ENCODE measurements at regions of chr12 and their contacts with region 1.

Region 1: GRCh38 chr12:56041552-56042429 is at the start of gene RPS26:
- DNase-seq: peak; percentile 75 to 97 (median 94)
- ATAC-seq: peak; percentile 94
- H3K4me3 ChIP-seq: peak within 1 kb of the TSS; percentile 100
- H3K4me3 Mint-ChIP-seq: peak within 1 kb of the TSS; percentile 91 to 100 (median 98)
- H3K27ac ChIP-seq: peak within 1 kb of the TSS; percentile 84
- H3K27ac Mint-ChIP-seq: peak within 1 kb of the TSS; percentile 94 to 99 (median 97)
- H3K4me1 ChIP-seq: peaks cover 16 to 19% of the 10 kb centered on the region in 2 donors
- H3K4me1 Mint-ChIP-seq: peaks cover 14 to 56% (median 34%) of the 10 kb centered on the region in 7 donors
- H3K27me3 ChIP-seq: no peaks in the 10 kb centered on the region
- H3K27me3 Mint-ChIP-seq: no peaks in the 10 kb centered on the region
- total RNA-seq, gene RPS26: 40.8 to 64.5 (median 46.4) TPM

Region 2: DNA sequence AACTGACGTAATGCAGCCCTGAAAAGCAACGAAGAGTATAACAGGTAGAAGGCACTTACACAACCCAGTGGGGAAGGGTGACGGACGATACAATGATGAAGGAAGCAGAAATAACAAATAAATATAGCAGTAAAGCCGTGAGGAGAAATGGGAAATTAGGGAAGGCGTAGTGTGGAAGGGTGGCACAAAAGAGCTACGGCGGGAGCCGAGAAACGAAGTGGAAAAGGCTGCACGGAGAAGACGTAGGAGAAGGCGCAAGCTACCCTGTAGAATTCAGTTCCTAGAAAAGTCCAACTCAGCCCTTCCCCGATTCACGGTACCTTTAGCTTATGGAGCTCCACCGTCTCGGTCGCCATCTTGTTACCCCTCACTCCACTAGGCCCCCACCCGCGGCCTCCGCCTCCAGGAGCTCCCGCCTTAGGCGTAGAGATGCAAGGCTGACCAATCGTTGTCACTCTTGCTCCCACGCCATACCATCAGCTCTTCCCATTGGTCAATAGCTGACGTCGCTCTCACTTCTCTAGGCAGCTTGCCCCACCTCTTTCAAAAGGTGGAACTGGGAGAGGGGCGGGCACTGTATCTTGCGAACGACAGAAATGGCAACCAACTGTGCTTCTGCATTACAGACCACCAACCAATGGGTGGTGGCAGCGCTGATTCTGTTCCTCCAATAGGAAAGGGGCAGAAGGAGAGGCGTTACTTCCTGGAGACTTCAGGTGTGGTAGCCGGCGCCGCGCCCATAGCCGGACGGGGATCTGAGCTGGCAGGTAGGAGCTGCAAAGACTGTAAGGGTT is 224.2 kb before region 1 on chr12 and contains the starts of genes ORMDL2 and SARNP:
- CTCF ChIA-PET with region 1: no interaction called
- POLR2A ChIA-PET with region 1: interaction called, 3 read pairs
- intact Hi-C with region 1: loop called in 1 of 2 experiments (anchors 1 kb)
- DNase-seq: peak; percentile 81 to 99 (median 98)
- ATAC-seq: peak; percentile 96
- H3K4me3 ChIP-seq: peak within 1 kb of the TSS; percentile 94
- H3K4me3 Mint-ChIP-seq: no peak within 1 kb of the TSS
- H3K27ac ChIP-seq: peak within 1 kb of the TSS; percentile 88
- H3K27ac Mint-ChIP-seq: no peak within 1 kb of the TSS
- H3K4me1 ChIP-seq: peaks cover 22 to 41% of the 10 kb centered on the region in 2 donors
- H3K4me1 Mint-ChIP-seq: peaks cover 32 to 45% (median 37%) of the 10 kb centered on the region in 7 donors
- H3K27me3 ChIP-seq: no peaks in the 10 kb centered on the region
- H3K27me3 Mint-ChIP-seq: no peaks in the 10 kb centered on the region
- total RNA-seq, gene ORMDL2: 12.3 to 67.3 (median 40.5) TPM
- total RNA-seq, gene SARNP: 28.0 to 73.0 (median 41.7) TPM

Region 3: GRCh38 chr12:55996715-55997534 is 44.9 kb before region 1 on chr12 and contains the start of gene SUOX:
- CTCF ChIA-PET with region 1: interaction called, 8 read pairs
- POLR2A ChIA-PET with region 1: interaction called, 6 read pairs
- intact Hi-C with region 1: loop called (anchors 1 kb)
- DNase-seq: peak in 3 of 9 donors; percentile 8 to 58 (median 31)
- ATAC-seq: peak; percentile 93
- H3K4me3 ChIP-seq: no peak within 1 kb of the TSS
- H3K4me3 Mint-ChIP-seq: peak within 1 kb of the TSS; percentile 49 to 87 (median 62)
- H3K27ac ChIP-seq: no peak within 1 kb of the TSS
- H3K27ac Mint-ChIP-seq: peak within 1 kb of the TSS in 7 of 9 donors; percentile 19 to 78 (median 63)
- H3K4me1 ChIP-seq: peaks cover 0 to 14% of the 10 kb centered on the region in 2 donors
- H3K4me1 Mint-ChIP-seq: peaks cover 8 to 37% (median 16%) of the 10 kb centered on the region in 7 donors
- H3K27me3 ChIP-seq: no peaks in the 10 kb centered on the region
- H3K27me3 Mint-ChIP-seq: peaks cover 0 to 4% (median 0%) of the 10 kb centered on the region in 5 donors
- total RNA-seq, gene SUOX: 1.9 to 10.4 (median 7.1) TPM

Region 4: DNA sequence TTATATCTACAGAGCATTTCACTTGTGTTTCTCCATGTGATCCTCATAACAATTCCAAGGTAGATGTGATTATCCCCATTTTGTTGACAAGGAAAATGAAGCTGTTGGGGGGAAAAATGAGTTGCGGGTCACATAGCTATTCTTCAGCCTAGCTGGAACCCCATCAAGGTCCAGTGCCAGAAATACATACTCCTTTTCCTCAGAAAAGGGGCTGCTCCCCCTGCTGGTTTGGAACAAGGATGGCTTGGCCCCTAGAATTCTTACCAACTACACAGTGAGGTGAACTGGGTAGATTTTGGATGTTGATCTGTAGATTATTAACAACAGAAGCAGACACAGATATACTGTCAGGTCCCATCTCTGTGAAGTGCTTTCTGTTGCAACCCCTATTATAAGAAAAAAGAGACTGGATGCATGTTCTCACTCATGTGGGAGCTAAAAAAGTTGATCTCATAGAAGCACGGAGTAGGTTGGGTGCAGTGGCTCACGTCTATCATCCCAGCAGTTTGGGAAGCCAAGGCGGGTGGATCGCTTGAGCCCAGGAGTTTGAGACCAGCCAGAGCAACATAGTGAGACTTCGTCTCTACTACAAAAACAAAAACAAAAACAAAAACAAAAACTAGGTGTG is 12.0 kb before region 1 on chr12:
- CTCF ChIA-PET with region 1: interaction called, 4 read pairs
- POLR2A ChIA-PET with region 1: interaction called, 9 read pairs
- intact Hi-C with region 1: loop called in 1 of 2 experiments (anchors 1 kb)
- DNase-seq: peak in 8 of 9 donors; percentile 24 to 59 (median 46)
- ATAC-seq: peak; percentile 71
- H3K4me3 ChIP-seq: no peak overlapping the region
- H3K4me3 Mint-ChIP-seq: peak overlapping the region in 1 of 10 donors; percentile 1
- H3K27ac ChIP-seq: no peak overlapping the region
- H3K27ac Mint-ChIP-seq: peak overlapping the region in 4 of 9 donors; percentile 3 to 74 (median 32)
- H3K4me1 ChIP-seq: peaks cover 0 to 7% of the 10 kb centered on the region in 2 donors
- H3K4me1 Mint-ChIP-seq: peaks cover 9 to 54% (median 20%) of the 10 kb centered on the region in 7 donors
- H3K27me3 ChIP-seq: no peaks in the 10 kb centered on the region
- H3K27me3 Mint-ChIP-seq: no peaks in the 10 kb centered on the region

Region 5: DNA sequence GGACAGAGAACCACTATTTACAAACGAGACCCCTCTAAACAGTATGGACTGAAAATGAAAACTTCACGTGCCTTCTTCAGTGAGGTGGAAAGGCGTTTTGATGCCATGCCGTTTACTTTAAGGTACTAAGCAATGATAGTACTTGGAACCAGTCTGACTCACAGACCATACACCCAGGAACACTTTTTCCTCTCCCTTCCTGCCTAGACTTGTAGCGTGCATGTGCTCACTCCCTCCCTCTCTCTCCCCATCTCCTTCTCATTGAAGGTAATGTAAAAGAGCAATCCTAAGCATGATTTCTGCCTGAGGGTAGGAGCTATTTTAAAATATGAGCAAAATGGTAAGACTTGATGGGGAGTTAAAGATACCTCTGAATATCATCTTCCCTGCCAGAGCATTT is 68.8 kb after region 1 on chr12:
- CTCF ChIA-PET with region 1: interaction called, 3 read pairs
- POLR2A ChIA-PET with region 1: interaction called, 62 read pairs
- intact Hi-C with region 1: no loop called
- DNase-seq: no peak
- ATAC-seq: no peak
- H3K4me3 ChIP-seq: no peak overlapping the region
- H3K4me3 Mint-ChIP-seq: no peak overlapping the region
- H3K27ac ChIP-seq: no peak overlapping the region
- H3K27ac Mint-ChIP-seq: peak overlapping the region in 1 of 9 donors; percentile 44
- H3K4me1 ChIP-seq: peaks cover 11 to 14% of the 10 kb centered on the region in 2 donors
- H3K4me1 Mint-ChIP-seq: peaks cover 7 to 40% (median 17%) of the 10 kb centered on the region in 7 donors
- H3K27me3 ChIP-seq: no peaks in the 10 kb centered on the region
- H3K27me3 Mint-ChIP-seq: no peaks in the 10 kb centered on the region

Region 6: DNA sequence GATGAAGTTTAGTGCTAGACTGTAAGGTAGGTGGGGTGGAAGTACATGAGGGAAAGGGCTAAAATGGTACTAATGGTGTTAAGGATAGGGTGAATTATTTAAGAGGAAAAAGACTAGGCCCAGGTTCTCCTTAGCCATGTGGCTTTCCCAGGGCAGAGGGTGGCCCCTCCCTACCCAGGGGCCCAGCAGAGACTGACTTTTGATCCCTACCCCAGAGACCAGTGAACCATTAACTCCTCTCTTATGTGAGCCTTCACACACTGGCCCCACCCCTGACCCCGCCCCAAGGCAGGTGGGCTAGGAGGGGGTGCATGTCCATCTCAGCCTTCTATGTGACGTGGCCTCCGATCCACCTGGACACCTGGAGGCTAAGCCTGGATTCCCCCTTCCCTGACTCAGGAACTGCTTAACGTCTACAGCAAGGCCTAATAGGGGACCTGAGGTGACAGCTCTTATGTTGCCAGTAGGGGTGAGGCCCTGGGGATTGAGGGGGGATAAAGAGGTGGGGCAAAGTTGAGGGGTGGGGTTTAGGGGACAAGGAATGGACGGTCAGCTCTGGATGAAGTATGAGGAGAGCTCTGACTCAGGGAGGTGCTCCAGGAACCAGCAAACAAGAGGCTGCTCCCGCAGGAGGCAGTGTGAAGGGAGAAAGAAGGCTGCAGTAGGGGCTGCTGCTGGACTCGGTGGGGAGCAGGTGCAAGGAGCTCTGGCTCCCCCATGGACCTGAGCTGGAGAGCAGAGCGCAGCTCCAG is 188.8 kb after region 1 on chr12:
- CTCF ChIA-PET with region 1: no interaction called
- POLR2A ChIA-PET with region 1: no interaction called
- intact Hi-C with region 1: no loop called
- DNase-seq: no peak
- ATAC-seq: no peak
- H3K4me3 ChIP-seq: no peak overlapping the region
- H3K4me3 Mint-ChIP-seq: no peak overlapping the region
- H3K27ac ChIP-seq: no peak overlapping the region
- H3K27ac Mint-ChIP-seq: no peak overlapping the region
- H3K4me1 ChIP-seq: no peaks in the 10 kb centered on the region
- H3K4me1 Mint-ChIP-seq: peaks cover 0 to 5% (median under 1%) of the 10 kb centered on the region in 7 donors
- H3K27me3 ChIP-seq: no peaks in the 10 kb centered on the region
- H3K27me3 Mint-ChIP-seq: no peaks in the 10 kb centered on the region

Measured in naive thymus-derived CD4-positive, alpha-beta T cell (primary cell).